ENCODE measurements at regions of chr18 and their contacts with region 1.

Region 1: GRCh38 chr18:3454365-3455089 is 4.6 kb downstream of the TGIF1 start:
- DNase-seq: peak; percentile 57
- H3K4me3 Mint-ChIP-seq: peak overlapping the region; percentile 91
- H3K27ac Mint-ChIP-seq: peak overlapping the region; percentile 97
- H3K4me1 Mint-ChIP-seq: peaks cover 66% of the 10 kb centered on the region
- H3K27me3 Mint-ChIP-seq: no peaks in the 10 kb centered on the region

Region 2: GRCh38 chr18:2606335-2606734 is 848.2 kb before region 1 on chr18:
- CTCF ChIA-PET with region 1: no interaction called
- POLR2A ChIA-PET with region 1: interaction called, 15 read pairs
- DNase-seq: no peak
- H3K4me3 Mint-ChIP-seq: peak overlapping the region; percentile 61
- H3K27ac Mint-ChIP-seq: peak overlapping the region; percentile 89
- H3K4me1 Mint-ChIP-seq: peaks cover 55% of the 10 kb centered on the region
- H3K27me3 Mint-ChIP-seq: no peaks in the 10 kb centered on the region

Region 3: DNA sequence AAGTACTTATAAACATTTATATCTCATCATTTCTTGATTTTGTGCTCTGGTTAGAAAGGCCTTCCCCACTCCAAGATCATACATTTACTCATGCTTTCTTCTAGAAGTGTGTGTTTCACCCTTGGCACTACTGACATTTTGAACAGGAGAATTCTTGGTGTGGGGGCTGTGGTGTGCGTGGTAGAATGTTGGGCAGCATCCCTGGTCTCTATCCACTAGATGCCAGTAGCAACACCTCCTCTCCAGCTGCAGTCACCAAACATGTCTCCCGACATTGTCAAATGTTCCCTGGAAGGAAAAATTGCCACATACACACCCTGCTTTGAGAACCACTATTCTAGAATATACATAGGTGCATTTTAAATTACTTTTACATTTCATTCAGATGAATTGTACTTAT is 13.2 kb before region 1 on chr18:
- CTCF ChIA-PET with region 1: interaction called, 10 read pairs
- POLR2A ChIA-PET with region 1: no interaction called
- DNase-seq: no peak
- H3K4me3 Mint-ChIP-seq: no peak overlapping the region
- H3K27ac Mint-ChIP-seq: no peak overlapping the region
- H3K4me1 Mint-ChIP-seq: peaks cover 7% of the 10 kb centered on the region
- H3K27me3 Mint-ChIP-seq: peaks cover 6% of the 10 kb centered on the region

Region 4: GRCh38 chr18:3466045-3466444 is 11.5 kb after region 1 on chr18:
- CTCF ChIA-PET with region 1: interaction called, 13 read pairs
- POLR2A ChIA-PET with region 1: no interaction called
- DNase-seq: no peak
- H3K4me3 Mint-ChIP-seq: no peak overlapping the region
- H3K27ac Mint-ChIP-seq: peak overlapping the region; percentile 62
- H3K4me1 Mint-ChIP-seq: peaks cover 16% of the 10 kb centered on the region
- H3K27me3 Mint-ChIP-seq: no peaks in the 10 kb centered on the region

Measured in activated CD4-positive, alpha-beta T cell treated with anti-CD3 and anti-CD28 coated beads, Interleukin-2, amount 10 ng/mL, durations not matched to agents 7 days and 5 days (primary cell).